GM23248 (cell line): ENCODE measurements at regions of chr2 and their contacts with region 1.

Region 1: DNA sequence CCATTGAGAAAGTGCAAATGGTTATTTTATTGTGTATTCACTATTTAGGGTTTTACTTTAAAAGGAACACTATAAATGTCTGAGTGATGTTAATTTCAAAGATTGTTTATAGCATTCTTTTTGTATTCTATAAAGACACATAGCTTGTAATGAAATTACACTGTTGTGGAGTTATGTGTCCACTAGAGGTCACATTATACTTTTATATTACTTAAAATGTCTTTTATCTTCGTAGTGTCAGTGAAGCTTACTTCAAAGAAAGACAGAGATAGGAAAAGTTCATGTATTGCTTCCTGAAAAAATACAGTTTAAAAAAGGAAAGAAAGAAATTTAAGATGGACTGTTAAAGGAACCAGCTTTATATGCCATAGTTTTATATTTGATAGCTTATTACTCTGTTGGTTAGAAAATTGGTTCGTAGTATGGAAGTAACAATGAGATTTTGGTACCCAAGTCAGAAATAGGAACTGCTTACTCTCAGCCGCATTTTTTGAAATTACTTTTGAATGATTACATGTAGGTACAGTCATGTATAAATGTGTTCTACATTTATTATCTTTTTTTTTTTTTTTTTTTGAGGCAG is 20.5 kb downstream of the APLF start:
- DNase-seq: peak; percentile 55
- H3K4me3 ChIP-seq: no peak overlapping the region
- H3K27ac ChIP-seq: no peak overlapping the region
- H3K4me1 ChIP-seq: peaks cover 4% of the 10 kb centered on the region; the same call in 1 of the 2 replicates
- H3K27me3 ChIP-seq: no peaks in the 10 kb centered on the region

Region 2: GRCh38 chr2:68715353-68716041 is 227.6 kb after region 1 on chr2:
- in situ Hi-C with region 1: loop called (anchors 25 kb)
- DNase-seq: peak; percentile 63
- H3K4me3 ChIP-seq: no peak overlapping the region
- H3K27ac ChIP-seq: no peak overlapping the region
- H3K4me1 ChIP-seq: no peaks in the 10 kb centered on the region
- H3K27me3 ChIP-seq: peaks cover 26% of the 10 kb centered on the region

Region 3: GRCh38 chr2:68762665-68763064 is 274.8 kb after region 1 on chr2:
- in situ Hi-C with region 1: no loop called
- DNase-seq: no peak
- H3K4me3 ChIP-seq: no peak overlapping the region
- H3K27ac ChIP-seq: no peak overlapping the region
- H3K4me1 ChIP-seq: no peaks in the 10 kb centered on the region
- H3K27me3 ChIP-seq: peaks cover 14% of the 10 kb centered on the region; the same call in 1 of the 2 replicates

Region 4: DNA sequence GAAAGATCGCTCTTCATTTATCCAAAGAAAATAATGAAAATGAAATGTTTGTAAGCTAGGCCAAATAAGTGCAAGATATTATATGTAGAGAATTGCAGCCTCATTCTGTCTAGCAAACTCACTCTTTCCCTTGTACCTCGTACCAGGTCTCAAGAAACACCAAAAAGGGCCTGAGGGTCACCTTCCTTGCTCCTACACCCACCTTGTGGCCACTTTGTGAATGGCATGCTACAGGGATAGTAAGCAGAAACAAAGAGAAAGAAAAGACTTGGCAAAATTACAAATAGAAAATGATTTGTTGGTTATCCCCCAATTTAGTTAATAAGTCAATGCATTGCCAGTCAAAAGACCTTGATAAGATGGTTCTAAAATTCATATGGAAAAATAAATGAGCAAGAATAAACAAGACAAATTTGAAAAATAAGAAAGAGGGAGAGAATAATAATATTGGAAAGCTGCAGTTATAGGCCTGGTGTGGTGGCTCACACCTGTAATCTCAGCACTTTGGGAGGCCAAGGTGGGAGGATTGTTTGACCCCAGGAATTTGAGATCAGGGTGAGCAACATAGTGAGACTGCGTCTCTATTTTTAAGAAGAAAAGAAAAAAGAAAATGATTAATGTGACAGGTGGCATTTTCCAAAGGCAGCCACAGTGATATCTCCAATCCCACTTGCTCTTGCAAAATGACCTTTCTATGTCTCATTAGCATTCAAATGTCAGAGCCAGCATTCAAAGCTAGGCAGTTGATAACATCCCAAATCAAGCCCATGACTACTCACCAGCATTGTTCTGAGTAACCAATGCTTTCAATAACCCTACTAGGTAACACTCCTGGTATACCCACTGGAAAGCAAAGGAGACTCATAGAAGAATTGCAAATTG is 422.2 kb after region 1 on chr2:
- in situ Hi-C with region 1: loop called (anchors 10 kb)
- DNase-seq: peak; percentile 77
- H3K4me3 ChIP-seq: no peak overlapping the region
- H3K27ac ChIP-seq: no peak overlapping the region
- H3K4me1 ChIP-seq: peaks cover 6% of the 10 kb centered on the region
- H3K27me3 ChIP-seq: no peaks in the 10 kb centered on the region